ENCODE measurements at regions of chr1 and their contacts with region 1.

Region 1: DNA sequence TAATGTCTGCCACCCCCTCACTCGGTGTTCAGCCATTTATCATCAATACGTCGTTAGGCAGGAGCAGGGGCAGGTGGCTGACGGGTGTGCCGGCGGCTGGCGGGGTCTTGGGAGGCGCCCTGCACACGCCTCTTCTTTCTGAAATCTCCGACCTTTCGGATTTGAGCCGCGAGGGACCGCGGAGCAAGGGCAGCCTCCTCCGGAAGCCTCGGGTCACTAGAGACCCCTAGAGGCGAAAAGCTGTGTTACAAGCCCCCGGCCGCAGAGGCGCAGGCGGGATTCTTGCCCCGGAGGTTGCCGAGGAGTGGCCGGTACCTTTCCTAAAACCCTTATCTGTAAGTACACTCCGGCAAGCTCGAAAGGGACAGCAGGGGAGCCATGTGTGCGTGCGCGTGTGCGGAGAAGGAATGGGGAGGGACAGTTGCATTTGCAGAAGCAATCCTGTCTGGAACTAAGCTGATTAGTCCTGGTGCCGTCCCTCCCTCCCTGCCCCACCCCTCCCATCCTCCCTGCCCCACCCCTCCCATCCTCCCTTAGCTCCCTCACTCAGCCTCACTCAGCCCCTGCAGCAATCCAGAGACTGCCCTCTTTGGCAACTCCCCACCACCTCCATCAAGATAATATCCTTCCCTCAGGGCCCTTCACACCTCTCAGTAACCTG is 11.0 kb downstream of the BRINP2 start:
- DNase-seq: peak; percentile 58
- ATAC-seq: peak; percentile 77
- H3K4me3 Mint-ChIP-seq: peak overlapping the region; percentile 19
- H3K27ac Mint-ChIP-seq: no peak overlapping the region
- H3K4me1 Mint-ChIP-seq: peaks cover 7% of the 10 kb centered on the region
- H3K27me3 Mint-ChIP-seq: peaks cover 23% of the 10 kb centered on the region
- CTCF ChIP-seq: peak; percentile 73

Region 2: GRCh38 chr1:177091040-177091439 is 90.7 kb before region 1 on chr1:
- CTCF ChIA-PET with region 1: no interaction called
- POLR2A ChIA-PET with region 1: no interaction called
- intact Hi-C with region 1: no loop called
- DNase-seq: no peak
- ATAC-seq: no peak
- H3K4me3 Mint-ChIP-seq: no peak overlapping the region
- H3K27ac Mint-ChIP-seq: no peak overlapping the region
- H3K4me1 Mint-ChIP-seq: no peaks in the 10 kb centered on the region
- H3K27me3 Mint-ChIP-seq: no peaks in the 10 kb centered on the region
- CTCF ChIP-seq: no peak

Region 3: DNA sequence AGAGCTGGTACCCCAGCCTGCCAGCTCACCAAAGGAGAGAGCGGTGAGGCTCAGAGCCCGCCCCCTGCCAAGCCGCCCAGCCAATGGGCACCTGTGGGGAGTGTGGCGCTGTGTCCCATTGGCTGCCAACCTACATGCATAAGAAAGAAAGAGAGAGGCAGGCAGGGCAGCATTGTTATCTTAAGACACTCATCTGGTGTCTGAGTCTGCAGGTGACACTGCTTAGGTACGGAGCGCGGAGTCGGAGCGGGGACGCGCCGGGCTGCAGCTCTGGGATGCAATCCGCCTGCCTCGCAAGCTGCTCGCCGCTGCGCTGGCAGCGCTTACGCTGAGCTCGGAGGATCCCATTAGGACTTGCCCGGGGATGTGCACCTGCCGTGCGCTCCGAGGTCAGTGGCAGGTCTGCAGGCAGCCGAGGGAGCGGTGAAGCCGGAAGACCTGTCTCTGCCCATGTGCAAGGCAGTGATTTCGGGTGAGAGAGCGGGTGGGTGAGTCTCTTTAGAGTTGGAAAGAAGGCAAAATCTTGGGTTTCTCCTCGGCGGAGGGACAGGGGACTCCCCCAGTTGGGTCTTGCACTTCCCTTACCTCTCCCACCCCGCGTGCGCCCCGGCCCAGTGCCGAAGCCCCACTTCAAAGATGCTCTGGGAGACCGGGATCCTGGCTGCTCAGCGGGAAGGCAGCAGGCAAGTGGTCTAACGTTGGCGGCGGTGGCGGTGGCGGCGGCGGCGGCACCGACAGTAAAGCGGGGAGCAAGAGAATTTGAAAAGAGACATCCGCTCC is 10.8 kb before region 1 on chr1 and contains the start of gene BRINP2:
- CTCF ChIA-PET with region 1: interaction called, 11 read pairs
- POLR2A ChIA-PET with region 1: no interaction called
- intact Hi-C with region 1: no loop called
- DNase-seq: no peak
- ATAC-seq: no peak
- H3K4me3 Mint-ChIP-seq: no peak within 1 kb of the TSS
- H3K27ac Mint-ChIP-seq: no peak within 1 kb of the TSS
- H3K4me1 Mint-ChIP-seq: no peaks in the 10 kb centered on the region
- H3K27me3 Mint-ChIP-seq: peaks cover 15% of the 10 kb centered on the region
- CTCF ChIP-seq: no peak
- total RNA-seq, gene BRINP2: not detected